ENCODE measurements at regions of chr6 and their contacts with region 1.

Region 1: DNA sequence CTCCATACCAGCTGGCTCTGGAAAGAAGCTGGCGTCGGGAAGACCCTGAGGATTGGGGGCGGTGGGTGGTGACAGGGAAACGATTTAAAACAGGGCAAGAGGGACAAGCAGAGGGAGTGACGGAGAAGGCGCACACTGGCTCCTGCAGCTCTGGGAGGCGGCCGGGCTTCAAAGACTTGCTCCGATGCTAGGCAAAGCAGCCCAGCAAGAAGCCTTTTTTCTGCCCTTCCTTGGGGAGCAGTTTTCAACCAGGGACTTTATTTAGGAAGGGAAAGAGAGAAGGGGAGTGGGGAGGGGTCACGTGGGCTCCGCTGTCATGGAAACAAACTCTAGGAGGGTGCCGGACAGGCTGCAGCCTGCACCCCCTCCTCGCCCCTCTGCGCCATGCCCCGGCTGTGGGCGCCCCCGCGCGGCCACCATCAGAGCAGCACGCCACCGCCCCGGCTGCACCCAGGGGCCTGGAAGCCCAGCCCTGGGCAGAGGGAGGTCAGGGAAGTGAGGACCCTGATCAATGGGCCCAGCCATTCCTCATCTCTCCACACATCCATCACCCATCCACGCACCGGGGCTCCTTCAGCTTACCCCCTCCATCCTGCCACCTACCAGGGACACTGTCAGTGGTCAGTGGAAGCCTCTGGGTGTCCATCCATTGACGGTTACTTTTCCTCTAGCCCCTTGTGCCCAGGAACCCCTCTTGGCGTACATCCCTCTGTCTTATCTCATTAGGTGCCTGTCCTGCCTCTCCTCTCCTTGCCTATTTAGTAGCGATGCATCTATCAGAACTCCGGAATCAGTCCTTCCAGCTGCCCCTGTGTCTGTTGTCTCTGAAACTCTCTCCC is 66.6 kb upstream of the CCDC167 start:
- DNase-seq: peak in 1 of 2 experiments; percentile 95
- H3K4me3 ChIP-seq: peak overlapping the region; percentile 21 to 71 (median 54)
- H3K27ac ChIP-seq: no peak overlapping the region
- H3K4me1 ChIP-seq: peaks cover 2 to 13% (median 5%) of the 10 kb centered on the region in 4 experiments; a peak in 6 of 7 replicates
- H3K27me3 ChIP-seq: no peaks in the 10 kb centered on the region; a peak in 2 of 7 replicates
- CTCF ChIP-seq: peak; percentile 84 to 93 (median 91)
- EP300 ChIP-seq: 0 out of 3 replicates have a peak, but pooled peaks of 1 of the 2 experiments have one; percentile 30
- POLR2A ChIP-seq: no peak
- RAD21 ChIP-seq: peak; percentile 89

Region 2: DNA sequence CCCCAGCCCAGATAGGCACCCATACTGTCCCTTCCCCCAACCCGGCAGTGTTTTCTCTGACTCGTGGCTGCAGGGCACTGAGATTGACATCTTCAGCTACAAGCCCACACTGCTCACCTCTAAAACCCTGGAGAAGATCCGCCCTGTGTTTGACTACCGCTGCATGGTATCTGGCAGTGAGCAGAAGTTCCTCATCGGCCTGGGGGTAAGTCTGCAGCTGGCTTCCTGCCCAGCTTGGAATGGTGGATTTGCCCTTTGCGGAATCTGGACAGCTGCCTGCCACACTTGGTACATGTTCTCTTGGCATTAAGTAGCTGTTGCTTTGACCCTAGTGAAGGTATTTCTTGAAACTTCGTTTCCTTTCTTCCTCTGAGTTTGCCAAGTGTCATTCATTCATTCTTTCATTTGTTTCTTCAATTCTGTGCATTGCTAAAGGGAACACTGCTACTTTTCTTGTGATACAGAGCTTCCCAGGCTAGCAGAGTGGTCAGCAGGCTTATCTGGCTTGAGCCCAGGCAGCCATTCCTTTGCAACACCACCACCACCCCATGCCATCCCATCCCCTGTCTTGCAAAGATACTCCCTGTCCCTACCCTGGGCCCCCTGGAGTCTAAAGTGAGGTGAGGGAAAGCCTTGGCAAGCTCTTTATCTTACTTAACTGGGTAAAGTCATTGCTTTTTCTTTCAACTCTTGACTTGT is 92.8 kb before region 1 on chr6:
- CTCF ChIA-PET with region 1: no interaction called
- POLR2A ChIA-PET with region 1: no interaction called
- DNase-seq: no peak
- H3K4me3 ChIP-seq: no peak overlapping the region
- H3K27ac ChIP-seq: no peak overlapping the region
- H3K4me1 ChIP-seq: no peaks in the 10 kb centered on the region
- H3K27me3 ChIP-seq: no peaks in the 10 kb centered on the region
- CTCF ChIP-seq: no peak
- EP300 ChIP-seq: no peak
- POLR2A ChIP-seq: no peak
- RAD21 ChIP-seq: no peak

Region 3: DNA sequence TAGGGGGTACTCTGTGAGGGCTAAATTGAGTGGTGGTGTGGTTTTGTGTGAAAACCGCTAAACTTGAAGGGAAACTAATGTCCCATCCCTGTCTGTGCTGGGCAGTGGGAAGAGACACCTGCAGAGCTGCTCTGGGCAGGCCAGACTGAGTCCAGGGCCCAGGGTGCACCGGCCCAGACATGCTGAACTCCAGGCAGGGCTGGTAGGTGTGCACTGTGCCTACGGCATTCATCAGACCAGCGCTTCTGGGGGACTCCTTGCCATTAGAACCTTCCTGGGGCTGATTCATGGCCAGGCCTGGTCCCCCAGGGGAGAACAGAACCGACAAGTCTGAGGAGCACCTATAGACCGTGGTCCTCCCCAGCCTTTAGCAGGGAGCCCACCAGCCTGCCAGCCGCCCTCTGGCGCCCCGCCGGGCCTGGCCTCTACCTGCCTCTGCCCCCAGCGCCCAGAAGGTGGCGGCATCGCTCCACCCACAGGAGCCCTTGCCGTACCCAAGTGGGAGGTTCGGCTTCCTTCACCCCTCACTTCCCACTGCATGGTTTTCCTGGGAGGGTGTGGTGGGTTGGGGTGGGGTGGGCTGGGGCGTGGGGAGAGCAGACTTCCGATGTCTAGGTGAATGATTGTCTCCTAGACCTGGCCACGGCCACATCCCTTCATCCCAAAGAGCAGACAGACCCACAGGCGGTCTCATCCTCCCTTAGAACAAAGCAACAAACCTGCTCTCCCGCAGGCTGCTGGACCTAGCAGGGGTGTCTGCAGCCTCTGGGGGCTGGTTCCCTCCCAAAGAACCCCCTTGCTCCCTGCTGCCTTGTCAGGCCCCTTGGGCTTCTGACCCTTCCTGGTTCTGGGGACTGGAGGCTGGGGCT is 82.2 kb before region 1 on chr6:
- CTCF ChIA-PET with region 1: interaction called, 25 read pairs
- POLR2A ChIA-PET with region 1: interaction called, 4 read pairs
- DNase-seq: peak; percentile 23 to 93
- H3K4me3 ChIP-seq: no peak overlapping the region
- H3K27ac ChIP-seq: no peak overlapping the region
- H3K4me1 ChIP-seq: peaks cover 0 to 15% (median 4%) of the 10 kb centered on the region in 4 experiments; a peak in 5 of 7 replicates
- H3K27me3 ChIP-seq: no peaks in the 10 kb centered on the region
- CTCF ChIP-seq: peak in 2 of 3 experiments; percentile 91 to 97; a peak in 3 of 4 replicates
- EP300 ChIP-seq: no peak
- POLR2A ChIP-seq: no peak
- RAD21 ChIP-seq: peak; percentile 97 to 98

Region 4: DNA sequence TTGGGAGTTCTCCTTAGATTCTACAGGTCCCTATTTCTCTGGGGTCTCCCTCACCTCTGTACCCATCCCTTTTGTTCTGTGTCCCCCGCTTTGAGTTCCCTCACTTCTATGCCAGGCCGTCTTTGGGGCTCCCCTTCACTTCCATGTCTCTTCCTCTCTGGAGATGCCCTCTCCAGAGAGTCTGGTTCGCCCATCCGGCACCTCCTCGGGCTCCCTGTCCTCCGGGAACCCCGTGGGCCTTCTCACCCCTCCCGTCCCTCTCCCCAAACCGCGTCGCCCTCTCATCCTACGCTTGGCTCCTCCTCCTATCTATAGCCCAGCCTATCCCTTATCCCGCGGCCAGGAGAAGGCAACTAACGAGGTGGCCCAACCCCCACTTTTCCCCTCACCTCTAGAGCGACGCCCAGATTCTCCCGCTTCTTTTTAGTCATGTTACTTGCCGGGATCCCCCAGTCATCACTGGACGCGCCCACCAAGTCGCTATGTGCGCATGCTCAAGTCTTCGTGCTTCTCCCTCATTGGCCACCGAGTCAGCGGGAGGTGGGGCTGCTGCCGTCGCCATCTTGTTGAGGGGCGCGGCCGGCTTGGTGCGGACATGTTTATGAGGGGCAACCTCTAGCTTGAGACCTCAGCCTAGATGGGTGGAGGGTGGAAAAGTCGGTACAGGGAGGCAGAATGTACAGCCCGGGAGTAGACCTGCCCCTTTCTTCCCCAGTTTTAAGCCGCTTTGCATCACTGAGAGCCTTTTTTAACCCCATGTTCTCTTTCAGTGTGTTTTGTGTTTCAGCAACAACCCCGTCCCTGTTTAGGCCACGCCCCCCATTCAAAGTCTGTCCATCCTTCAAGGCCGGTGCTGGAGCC is 66.7 kb before region 1 on chr6 and contains the start of gene CCDC167:
- CTCF ChIA-PET with region 1: interaction called, 15 read pairs
- POLR2A ChIA-PET with region 1: no interaction called
- DNase-seq: peak; percentile 98 to 99
- H3K4me3 ChIP-seq: peak within 1 kb of the TSS; percentile 56 to 69 (median 63)
- H3K27ac ChIP-seq: peak within 1 kb of the TSS; percentile 92
- H3K4me1 ChIP-seq: peaks cover 0 to 5% (median 3%) of the 10 kb centered on the region in 4 experiments; a peak in 4 of 7 replicates
- H3K27me3 ChIP-seq: peaks cover 0 to 8% (median 5%) of the 10 kb centered on the region in 4 experiments; a peak in 4 of 7 replicates
- CTCF ChIP-seq: no peak
- EP300 ChIP-seq: peak in 1 of 2 experiments; percentile 41; a peak in 1 of 3 replicates
- POLR2A ChIP-seq: peak; percentile 53 to 60; a peak in 2 of 3 replicates
- RAD21 ChIP-seq: no peak
- total RNA-seq, gene CCDC167: 11.0 TPM in 2 replicates

Region 5: GRCh38 chr6:37525460-37526357 is 40.6 kb before region 1 on chr6:
- CTCF ChIA-PET with region 1: interaction called, 308 read pairs
- POLR2A ChIA-PET with region 1: no interaction called
- DNase-seq: peak in 1 of 2 experiments; percentile 82
- H3K4me3 ChIP-seq: no peak overlapping the region
- H3K27ac ChIP-seq: no peak overlapping the region
- H3K4me1 ChIP-seq: no peaks in the 10 kb centered on the region; a peak in 2 of 7 replicates
- H3K27me3 ChIP-seq: 0 out of 7 replicates have a peak, but pooled peaks cover 0 to 2% (median 0%) of the 10 kb centered on the region in 4 experiments
- CTCF ChIP-seq: peak in 2 of 3 experiments; percentile 0 to 14; a peak in 1 of 4 replicates
- EP300 ChIP-seq: no peak
- POLR2A ChIP-seq: no peak
- RAD21 ChIP-seq: 0 out of 4 replicates have a peak, but pooled peaks of 1 of the 2 experiments have one; percentile 1

Region 6: GRCh38 chr6:37576336-37576813 is 10.0 kb after region 1 on chr6:
- CTCF ChIA-PET with region 1: interaction called, 163 read pairs
- POLR2A ChIA-PET with region 1: no interaction called
- DNase-seq: no peak
- H3K4me3 ChIP-seq: no peak overlapping the region
- H3K27ac ChIP-seq: no peak overlapping the region
- H3K4me1 ChIP-seq: no peaks in the 10 kb centered on the region
- H3K27me3 ChIP-seq: no peaks in the 10 kb centered on the region; a peak in 1 of 7 replicates
- CTCF ChIP-seq: no peak
- EP300 ChIP-seq: no peak
- POLR2A ChIP-seq: no peak
- RAD21 ChIP-seq: no peak

Measured in H1 (cell line).